ENCODE measurements at regions of chr13 and their contacts with region 1.

Region 1: GRCh38 chr13:102845630-102846260 is at the start of gene ERCC5:
- DNase-seq: peak; percentile 96
- H3K4me3 Mint-ChIP-seq: peak within 1 kb of the TSS; percentile 99
- H3K27ac Mint-ChIP-seq: peak within 1 kb of the TSS; percentile 98
- H3K4me1 Mint-ChIP-seq: peaks cover 41% of the 10 kb centered on the region
- H3K27me3 Mint-ChIP-seq: no peaks in the 10 kb centered on the region
- total RNA-seq, gene ERCC5: 82.3 to 89.9 TPM

Region 2: GRCh38 chr13:102394158-102395053 is 451.3 kb before region 1 on chr13:
- CTCF ChIA-PET with region 1: no interaction called
- POLR2A ChIA-PET with region 1: interaction called, 15 read pairs
- DNase-seq: peak; percentile 96
- H3K4me3 Mint-ChIP-seq: peak overlapping the region; percentile 82
- H3K27ac Mint-ChIP-seq: peak overlapping the region; percentile 74
- H3K4me1 Mint-ChIP-seq: peaks cover 24% of the 10 kb centered on the region
- H3K27me3 Mint-ChIP-seq: peaks cover 20% of the 10 kb centered on the region

Region 3: DNA sequence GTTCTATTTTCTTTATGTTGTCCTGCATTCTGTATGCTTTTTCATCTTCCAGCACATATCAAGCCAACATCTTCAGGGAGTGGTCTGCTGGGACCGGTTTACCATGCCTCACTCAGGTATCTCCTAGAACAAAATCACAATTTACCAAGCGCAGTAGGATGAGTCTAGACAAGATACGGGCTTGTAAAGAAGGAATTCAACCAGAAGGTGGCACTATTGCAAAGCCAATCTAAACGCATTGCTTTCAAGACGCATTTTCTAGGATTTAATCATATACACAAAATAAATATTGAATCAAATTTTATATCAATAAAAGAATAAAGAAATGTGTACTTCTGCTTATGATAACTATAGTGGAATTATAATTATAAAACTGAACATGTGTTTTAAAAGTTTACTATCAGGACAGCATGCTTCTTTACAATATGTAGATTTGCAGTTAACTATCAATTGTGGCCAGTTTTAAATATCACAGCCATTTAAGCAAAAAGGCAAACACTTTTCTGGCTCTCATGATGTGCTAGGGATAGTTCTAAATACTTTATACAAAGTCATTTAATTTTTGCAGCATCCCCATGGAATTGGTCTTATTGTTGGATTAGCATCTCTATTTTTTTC is 265.1 kb before region 1 on chr13:
- CTCF ChIA-PET with region 1: interaction called, 9 read pairs
- POLR2A ChIA-PET with region 1: interaction called, 21 read pairs
- DNase-seq: peak; percentile 24
- H3K4me3 Mint-ChIP-seq: no peak overlapping the region
- H3K27ac Mint-ChIP-seq: no peak overlapping the region
- H3K4me1 Mint-ChIP-seq: peaks cover 17% of the 10 kb centered on the region
- H3K27me3 Mint-ChIP-seq: peaks cover 11% of the 10 kb centered on the region

Region 4: DNA sequence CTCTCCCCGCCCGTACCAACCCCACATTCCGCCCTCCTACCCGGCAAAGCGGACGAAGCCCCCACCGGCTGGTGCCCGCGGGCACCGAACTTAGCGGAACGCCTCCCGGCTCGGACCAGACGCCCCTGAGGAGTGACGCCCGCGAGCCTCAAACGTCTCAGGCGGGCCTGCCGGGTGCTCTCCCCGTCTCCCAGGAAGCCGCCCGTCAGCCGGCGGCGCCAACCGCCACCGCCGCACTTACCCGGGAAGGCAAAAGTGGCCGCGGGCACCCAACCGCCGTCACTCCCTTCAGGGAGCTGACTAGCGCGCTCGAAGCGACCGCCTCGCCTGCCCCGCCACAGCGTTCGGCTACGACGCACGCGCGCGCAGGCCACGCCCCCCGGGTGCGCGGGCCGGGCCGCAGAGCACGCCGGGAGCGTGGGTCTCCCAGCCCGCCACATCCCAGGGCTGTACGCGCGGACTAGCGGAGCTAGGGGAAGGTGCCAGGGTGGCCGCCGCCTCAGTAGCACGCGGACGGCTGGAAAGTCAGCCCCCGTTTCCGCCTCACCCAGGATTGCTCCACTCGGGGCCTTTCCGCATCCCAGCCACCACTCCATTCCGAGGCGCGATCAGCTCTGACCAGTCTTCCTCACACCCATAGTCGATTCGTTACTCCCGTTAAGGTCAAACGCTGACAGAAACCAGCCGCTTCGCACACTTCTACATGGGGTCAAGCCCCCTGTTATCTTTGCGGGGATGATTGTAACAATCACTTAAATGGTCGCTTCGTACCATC is 72.1 kb before region 1 on chr13 and contains the start of gene TEX30:
- CTCF ChIA-PET with region 1: interaction called, 8 read pairs
- POLR2A ChIA-PET with region 1: interaction called, 66 read pairs
- DNase-seq: peak; percentile 90
- H3K4me3 Mint-ChIP-seq: peak within 1 kb of the TSS; percentile 85
- H3K27ac Mint-ChIP-seq: peak within 1 kb of the TSS; percentile 89
- H3K4me1 Mint-ChIP-seq: peaks cover 61% of the 10 kb centered on the region
- H3K27me3 Mint-ChIP-seq: no peaks in the 10 kb centered on the region
- total RNA-seq, gene TEX30: 35.0 to 36.6 TPM

Region 5: GRCh38 chr13:102800145-102801041 is 45.4 kb before region 1 on chr13:
- CTCF ChIA-PET with region 1: interaction called, 17 read pairs
- POLR2A ChIA-PET with region 1: interaction called, 71 read pairs
- DNase-seq: peak; percentile 89
- H3K4me3 Mint-ChIP-seq: peak overlapping the region; percentile 90
- H3K27ac Mint-ChIP-seq: peak overlapping the region; percentile 74
- H3K4me1 Mint-ChIP-seq: peaks cover 47% of the 10 kb centered on the region
- H3K27me3 Mint-ChIP-seq: no peaks in the 10 kb centered on the region

Region 6: GRCh38 chr13:102870677-102871415 is 25.1 kb after region 1 on chr13:
- CTCF ChIA-PET with region 1: interaction called, 22 read pairs
- POLR2A ChIA-PET with region 1: interaction called, 9 read pairs
- DNase-seq: peak; percentile 50
- H3K4me3 Mint-ChIP-seq: no peak overlapping the region
- H3K27ac Mint-ChIP-seq: no peak overlapping the region
- H3K4me1 Mint-ChIP-seq: peaks cover 31% of the 10 kb centered on the region
- H3K27me3 Mint-ChIP-seq: no peaks in the 10 kb centered on the region